ENCODE measurements at regions of chr13 and their contacts with region 1.

Region 1: DNA sequence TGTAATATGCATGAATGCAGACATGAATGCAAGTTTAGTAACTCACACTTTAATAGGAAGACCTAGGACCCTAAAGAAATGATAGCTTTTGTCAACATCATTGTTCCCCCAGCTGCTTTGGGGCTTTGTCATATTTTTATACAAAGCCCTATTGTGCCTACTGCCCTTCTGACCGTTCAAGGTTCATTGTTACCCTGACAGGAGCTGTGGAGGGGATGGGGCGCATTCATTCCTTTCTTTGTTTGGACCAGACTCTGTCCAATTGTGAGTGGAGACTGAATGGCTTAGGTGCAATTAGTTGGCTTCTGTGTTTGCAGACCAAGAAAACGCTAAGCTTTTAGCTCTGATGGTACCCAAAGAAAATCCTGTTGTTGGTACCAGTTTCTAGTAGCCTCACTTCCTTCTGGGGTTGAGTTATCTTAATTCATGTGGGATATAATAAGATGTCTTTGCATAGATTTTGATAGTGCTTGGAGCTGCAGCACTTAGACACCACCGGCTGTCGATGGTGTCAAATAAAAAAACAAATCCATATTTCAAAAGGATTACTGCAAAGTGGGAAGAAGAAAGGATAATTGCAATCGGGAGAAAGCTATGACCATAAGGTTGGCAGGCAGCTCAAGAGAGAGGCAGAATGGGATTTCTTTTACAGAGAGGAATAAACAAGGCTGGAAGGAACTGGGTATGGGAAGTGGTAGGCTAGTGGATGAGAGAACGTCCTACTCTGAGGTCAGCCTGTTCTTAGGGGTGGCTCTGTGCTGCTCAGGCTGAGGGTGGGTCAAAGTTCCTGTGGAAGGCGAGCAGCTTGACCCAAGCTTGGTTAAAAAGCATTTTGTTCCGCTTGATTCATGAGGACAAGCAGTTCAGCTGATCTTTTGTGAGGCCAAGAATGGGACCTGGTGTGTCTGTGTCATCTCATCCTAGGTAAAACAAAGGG is 134.0 kb upstream of the TMTC4 start:
- DNase-seq: no peak
- H3K4me3 ChIP-seq: no peak overlapping the region
- H3K27ac ChIP-seq: no peak overlapping the region
- H3K4me1 ChIP-seq: no peaks in the 10 kb centered on the region
- H3K27me3 ChIP-seq: no peaks in the 10 kb centered on the region
- CTCF ChIP-seq: no peak
- POLR2A ChIP-seq: no peak

Region 2: DNA sequence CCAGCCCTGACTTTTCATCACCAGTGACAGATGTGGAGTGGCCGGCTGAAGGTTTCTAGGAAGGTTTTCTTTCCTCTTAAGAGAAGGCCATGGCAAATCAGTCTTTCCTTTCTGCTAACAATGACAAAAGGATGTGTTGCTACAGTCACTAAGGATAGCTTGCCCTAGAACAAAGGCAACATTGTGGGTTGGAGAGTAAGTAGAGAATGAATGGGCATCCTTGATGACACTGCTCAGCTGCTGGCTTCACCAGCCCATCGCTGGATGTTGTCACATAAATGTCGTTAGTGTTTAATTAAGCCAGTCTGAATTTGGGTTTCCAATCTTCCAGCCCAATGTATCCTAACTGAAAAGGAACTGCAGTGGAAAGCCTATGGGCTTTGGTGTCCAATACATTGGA is 1005.5 kb before region 1 on chr13:
- intact Hi-C with region 1: loop called (anchors 5 kb)
- DNase-seq: no peak
- H3K4me3 ChIP-seq: no peak overlapping the region
- H3K27ac ChIP-seq: no peak overlapping the region
- H3K4me1 ChIP-seq: no peaks in the 10 kb centered on the region
- H3K27me3 ChIP-seq: no peaks in the 10 kb centered on the region
- CTCF ChIP-seq: no peak
- POLR2A ChIP-seq: no peak

Region 3: DNA sequence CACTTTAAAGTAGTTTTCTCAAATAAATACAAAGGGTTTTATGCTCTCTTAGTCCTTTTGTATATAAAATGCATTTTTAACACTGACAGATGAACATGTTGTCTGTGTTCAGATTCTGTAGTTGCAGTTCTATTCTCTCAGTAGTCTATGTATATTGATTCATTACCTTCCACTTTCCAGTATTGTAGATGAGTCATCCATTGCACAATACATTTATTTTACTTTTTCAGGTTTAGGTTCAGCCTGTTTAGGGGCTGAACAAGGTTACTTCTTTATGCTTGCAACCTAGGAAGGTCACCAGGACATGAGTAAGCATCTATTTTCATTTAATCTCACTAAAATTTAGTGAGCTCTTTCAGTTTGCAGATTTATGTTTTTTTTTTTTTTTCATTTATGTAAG is 434.1 kb after region 1 on chr13:
- intact Hi-C with region 1: no loop called
- DNase-seq: no peak
- H3K4me3 ChIP-seq: no peak overlapping the region
- H3K27ac ChIP-seq: no peak overlapping the region
- H3K4me1 ChIP-seq: no peaks in the 10 kb centered on the region
- H3K27me3 ChIP-seq: no peaks in the 10 kb centered on the region
- CTCF ChIP-seq: no peak
- POLR2A ChIP-seq: no peak

Region 4: DNA sequence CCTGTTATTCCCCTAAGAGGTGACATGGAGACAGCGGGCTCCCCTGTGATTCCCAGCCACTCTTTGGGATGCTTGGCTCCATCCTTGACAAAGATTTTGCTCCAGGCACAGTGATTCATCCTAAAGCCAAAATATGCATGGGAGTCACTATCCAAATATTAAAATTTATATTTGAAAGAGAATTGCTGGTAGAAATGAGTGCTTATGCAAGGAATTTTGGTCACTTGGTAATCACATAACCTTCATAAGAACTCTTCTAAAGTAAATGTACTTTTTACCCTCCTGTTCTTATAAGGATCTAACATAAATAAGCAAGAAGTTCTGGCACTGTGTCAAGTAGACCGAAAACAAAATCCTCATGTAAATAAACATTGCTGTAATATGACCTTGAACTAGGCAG is 1029.7 kb after region 1 on chr13:
- intact Hi-C with region 1: no loop called
- DNase-seq: no peak
- H3K4me3 ChIP-seq: no peak overlapping the region
- H3K27ac ChIP-seq: no peak overlapping the region
- H3K4me1 ChIP-seq: no peaks in the 10 kb centered on the region
- H3K27me3 ChIP-seq: no peaks in the 10 kb centered on the region
- CTCF ChIP-seq: no peak
- POLR2A ChIP-seq: no peak

Measured in vagina (tissue), 2 donors.